Dorsolateral prefrontal cortex (tissue), 120 donors: ENCODE measurements at regions of chr13 and their contacts with region 1.

Region 1: DNA sequence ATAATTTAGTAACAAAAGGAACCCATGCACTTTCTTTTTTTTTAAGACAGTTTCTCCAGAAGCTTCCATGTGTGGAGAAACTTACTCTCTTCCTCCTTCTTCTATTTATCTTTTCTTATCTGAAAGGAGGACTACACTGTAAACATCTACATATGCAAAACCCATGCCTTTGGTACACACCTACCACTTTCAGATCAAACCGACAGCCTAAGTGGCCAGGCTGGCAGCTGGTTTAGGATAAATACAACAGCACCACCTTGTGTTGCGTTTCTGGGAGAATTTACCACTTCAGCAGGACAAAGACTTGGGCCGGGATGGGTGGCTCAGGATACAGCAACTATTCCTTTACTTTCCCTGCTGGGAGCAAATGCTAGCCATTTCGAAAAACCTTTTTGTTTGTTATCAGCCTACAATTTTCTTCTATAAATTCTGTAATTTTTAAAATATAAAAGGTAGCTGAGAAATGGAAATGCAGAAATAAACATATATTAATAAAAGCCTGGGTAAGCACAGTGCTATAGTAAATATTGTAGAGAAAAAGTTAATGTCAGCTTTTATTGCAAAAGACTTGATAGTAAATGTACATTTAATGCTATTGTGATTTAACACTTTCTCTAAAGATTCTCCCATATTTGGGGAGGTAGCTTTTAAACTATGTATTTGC is 94.0 kb upstream of the RFC3 start:
- DNase-seq: peak; percentile 42 to 91 (median 80)
- H3K4me3 ChIP-seq: peak overlapping the region in 1 of 59 donors; percentile 12
- H3K27ac ChIP-seq: peak overlapping the region in 50 of 59 donors; percentile 2 to 76 (median 46)
- H3K27me3 ChIP-seq: no peaks in the 10 kb centered on the region
- CTCF ChIP-seq: peak; percentile 61 to 97 (median 85)

Region 2: GRCh38 chr13:32586080-32586900 is 1137.6 kb before region 1 on chr13 and contains the start of gene PDS5B:
- intact Hi-C with region 1: loop called (anchors 10 kb)
- DNase-seq: peak; percentile 79 to 97 (median 92)
- H3K4me3 ChIP-seq: peak within 1 kb of the TSS; percentile 59 to 98 (median 82)
- H3K27ac ChIP-seq: peak within 1 kb of the TSS; percentile 83 to 99 (median 97)
- H3K27me3 ChIP-seq: no peaks in the 10 kb centered on the region
- CTCF ChIP-seq: peak; percentile 57 to 98 (median 90)
- total RNA-seq, gene PDS5B: 55.6 to 161 (median 108) TPM

Region 3: DNA sequence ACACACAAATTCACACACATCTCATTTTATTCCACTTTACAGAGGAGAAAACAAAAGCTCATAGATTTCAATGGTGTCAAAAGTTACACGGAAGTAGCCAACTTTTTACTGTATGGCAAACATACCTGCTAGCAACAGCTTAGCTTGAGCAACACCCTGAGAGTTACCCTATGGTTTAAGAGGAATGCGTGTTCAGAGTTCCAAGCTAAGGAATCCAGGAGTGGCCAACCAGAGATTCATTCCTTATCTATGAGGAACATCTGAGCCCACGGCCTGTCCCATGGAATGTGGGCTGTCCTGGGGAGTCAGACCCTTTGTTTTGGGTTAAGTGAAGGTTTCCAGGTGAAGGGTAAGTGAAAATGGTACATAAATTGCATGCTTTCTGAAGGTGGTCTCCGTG is 505.9 kb before region 1 on chr13:
- intact Hi-C with region 1: loop called in 1 of 2 experiments (anchors 10 kb)
- DNase-seq: no peak
- H3K4me3 ChIP-seq: no peak overlapping the region
- H3K27ac ChIP-seq: peak overlapping the region in 9 of 59 donors; percentile 2 to 28 (median 7)
- H3K27me3 ChIP-seq: no peaks in the 10 kb centered on the region
- CTCF ChIP-seq: no peak

Region 4: GRCh38 chr13:33610471-33611015 is 113.4 kb before region 1 on chr13:
- intact Hi-C with region 1: loop called (anchors 2 to 5 kb)
- DNase-seq: peak; percentile 63 to 82 (median 77)
- H3K4me3 ChIP-seq: peak overlapping the region; percentile 9 to 64 (median 45)
- H3K27ac ChIP-seq: peak overlapping the region; percentile 78 to 99 (median 95)
- H3K27me3 ChIP-seq: no peaks in the 10 kb centered on the region
- CTCF ChIP-seq: peak in 20 of 56 donors; percentile 3 to 41 (median 18)

Region 5: DNA sequence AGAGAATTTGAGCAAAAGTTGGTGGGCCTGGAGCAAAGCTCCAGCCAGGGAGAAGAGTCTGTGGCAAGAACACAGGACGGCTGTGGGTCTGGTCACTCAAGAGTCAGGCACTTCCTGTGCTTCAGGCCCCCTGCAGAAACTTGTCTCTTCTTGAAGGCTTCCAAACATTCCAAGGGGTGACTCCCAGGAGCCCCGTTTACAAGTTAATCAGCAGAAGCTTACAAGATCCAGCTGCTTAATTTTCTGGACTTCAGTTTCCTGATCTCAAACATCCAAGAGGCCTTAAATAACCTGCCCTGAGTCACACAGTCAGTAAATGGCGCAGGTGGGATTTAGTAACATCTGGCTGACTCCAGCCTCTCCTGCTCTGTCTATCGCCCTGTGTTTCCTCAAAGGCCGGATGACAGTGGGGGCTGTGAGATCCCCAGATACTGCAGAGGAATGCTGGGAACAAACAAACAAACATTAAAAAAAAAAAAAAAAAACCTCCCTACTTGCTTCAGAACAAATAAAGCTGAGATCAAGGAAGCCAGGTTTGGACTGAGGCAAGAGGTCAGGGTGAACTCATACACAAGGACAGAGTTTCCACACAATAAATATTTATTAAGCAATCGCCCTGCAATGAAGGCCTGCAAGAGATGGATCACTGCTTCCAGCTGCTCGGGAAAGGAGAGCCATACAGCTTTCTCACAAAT is 81.4 kb before region 1 on chr13:
- intact Hi-C with region 1: loop called in 1 of 2 experiments (anchors 5 kb)
- DNase-seq: no peak
- H3K4me3 ChIP-seq: no peak overlapping the region
- H3K27ac ChIP-seq: peak overlapping the region in 19 of 59 donors; percentile 3 to 51 (median 24)
- H3K27me3 ChIP-seq: no peaks in the 10 kb centered on the region
- CTCF ChIP-seq: no peak

Region 6: DNA sequence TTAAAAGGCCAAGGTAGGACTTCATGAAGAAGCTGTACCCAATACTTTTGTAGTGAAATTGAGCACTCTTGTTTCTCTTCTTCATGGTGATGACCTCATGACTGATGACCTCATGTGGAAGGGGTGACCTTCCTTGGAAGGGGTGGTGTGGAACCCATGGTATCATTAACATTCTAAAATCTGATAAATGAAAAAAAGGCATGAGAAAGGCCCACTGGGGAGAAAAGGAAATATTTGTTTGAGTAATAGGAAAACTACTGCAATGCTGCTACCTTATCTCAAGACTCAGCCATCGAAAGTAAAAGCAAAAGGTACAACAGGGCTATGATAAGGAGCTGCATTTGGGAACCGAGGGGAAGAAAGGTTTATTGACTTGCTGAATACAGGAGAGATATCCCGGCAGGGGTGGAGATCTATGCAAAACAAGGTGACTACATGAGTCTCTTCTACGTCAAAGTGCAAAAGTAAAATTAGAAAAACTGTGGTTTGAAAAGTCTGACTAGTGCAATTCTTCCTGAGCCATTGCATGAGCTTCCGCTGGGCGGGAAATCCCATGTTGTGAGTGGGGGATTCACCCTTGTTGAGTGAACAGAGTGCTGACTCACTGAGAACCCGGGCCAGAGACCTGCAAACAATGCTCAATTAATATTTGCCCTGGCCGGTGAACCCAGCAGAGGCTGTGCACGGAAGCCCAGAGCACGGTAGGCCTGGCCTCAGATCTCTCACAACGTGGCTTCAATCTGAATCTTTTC is 44.8 kb before region 1 on chr13:
- intact Hi-C with region 1: loop called in 1 of 2 experiments (anchors 5 kb)
- DNase-seq: peak in 7 of 10 donors; percentile 25 to 83 (median 52)
- H3K4me3 ChIP-seq: peak overlapping the region in 7 of 59 donors; percentile 0 to 26 (median 15)
- H3K27ac ChIP-seq: peak overlapping the region in 26 of 59 donors; percentile 0 to 69 (median 38)
- H3K27me3 ChIP-seq: no peaks in the 10 kb centered on the region
- CTCF ChIP-seq: no peak

Region 7: GRCh38 chr13:34256236-34256635 is 532.3 kb after region 1 on chr13:
- intact Hi-C with region 1: no loop called
- DNase-seq: no peak
- H3K4me3 ChIP-seq: no peak overlapping the region
- H3K27ac ChIP-seq: no peak overlapping the region
- H3K27me3 ChIP-seq: no peaks in the 10 kb centered on the region
- CTCF ChIP-seq: no peak